Activated T-helper 1 cell treated with anti-CD3 and anti-CD28 coated beads, Interleukin-12 subunit alpha, Interleukin-12 subunit beta, Interleukin-2, Interleukin-4 antibody, amounts not matched to agents 30 ng/mL and 10 ng/mL and 1 ng/mL, durations not matched to agents 14 hours and 24 hours and 36 hours (primary cell): ENCODE measurements at regions of chr11 and their contacts with region 1.

Region 1: GRCh38 chr11:123054301-123055065 is 7.5 kb downstream of the HSPA8 start:
- DNase-seq: no peak
- H3K4me3 Mint-ChIP-seq: no peak overlapping the region
- H3K27ac Mint-ChIP-seq: peak overlapping the region; percentile 52
- H3K4me1 Mint-ChIP-seq: peaks cover 49% of the 10 kb centered on the region
- H3K27me3 Mint-ChIP-seq: no peaks in the 10 kb centered on the region

Region 2: DNA sequence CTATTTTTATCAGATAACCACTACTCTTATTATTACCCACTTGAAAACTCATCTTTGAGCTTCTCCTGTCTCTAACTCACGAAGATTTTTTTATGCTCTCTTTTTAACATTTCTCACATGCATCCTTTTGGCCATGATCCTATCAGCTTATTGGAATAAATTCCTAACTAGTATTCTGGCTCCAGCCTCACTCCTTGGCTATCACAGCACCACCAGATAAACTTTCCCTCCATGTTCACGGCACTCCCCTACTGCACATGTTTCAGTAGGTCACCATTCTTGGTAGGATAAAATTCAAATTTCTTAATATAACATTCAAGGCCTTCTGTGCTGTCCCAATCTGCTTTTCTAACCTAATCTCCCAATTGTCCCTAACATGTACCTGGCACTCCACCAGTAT is 585.5 kb before region 1 on chr11:
- intact Hi-C with region 1: no loop called
- DNase-seq: no peak
- H3K4me3 Mint-ChIP-seq: no peak overlapping the region
- H3K27ac Mint-ChIP-seq: no peak overlapping the region
- H3K4me1 Mint-ChIP-seq: no peaks in the 10 kb centered on the region
- H3K27me3 Mint-ChIP-seq: no peaks in the 10 kb centered on the region

Region 3: GRCh38 chr11:122863704-122864326 is 190.7 kb before region 1 on chr11:
- intact Hi-C with region 1: loop called (anchors 1 kb)
- DNase-seq: no peak
- H3K4me3 Mint-ChIP-seq: no peak overlapping the region
- H3K27ac Mint-ChIP-seq: no peak overlapping the region
- H3K4me1 Mint-ChIP-seq: no peaks in the 10 kb centered on the region
- H3K27me3 Mint-ChIP-seq: peaks cover 47% of the 10 kb centered on the region

Region 4: GRCh38 chr11:122910775-122911174 is 143.7 kb before region 1 on chr11:
- intact Hi-C with region 1: loop called (anchors 1 kb)
- DNase-seq: no peak
- H3K4me3 Mint-ChIP-seq: no peak overlapping the region
- H3K27ac Mint-ChIP-seq: no peak overlapping the region
- H3K4me1 Mint-ChIP-seq: no peaks in the 10 kb centered on the region
- H3K27me3 Mint-ChIP-seq: no peaks in the 10 kb centered on the region